IMR-90 (cell line): ENCODE measurements at regions of chr11 and their contacts with region 1.

Region 1: GRCh38 chr11:95512682-95513081 is 276.9 kb downstream of the FAM76B start:
- DNase-seq: peak; percentile 88
- ATAC-seq: peak; percentile 83
- H3K4me3 ChIP-seq: no peak overlapping the region
- H3K27ac ChIP-seq: no peak overlapping the region
- H3K4me1 ChIP-seq: peaks cover 5% of the 10 kb centered on the region
- H3K27me3 ChIP-seq: peaks cover 2% of the 10 kb centered on the region; the same call in 1 of the 2 replicates
- CTCF ChIP-seq: no peak
- POLR2A ChIP-seq: no peak
- RAD21 ChIP-seq: no peak

Region 2: GRCh38 chr11:95231127-95231880 is 281.4 kb before region 1 on chr11 and contains the start of gene SESN3:
- CTCF ChIA-PET with region 1: no interaction called
- POLR2A ChIA-PET with region 1: no interaction called
- dilution Hi-C with region 1: no loop called
- in situ Hi-C with region 1: no loop called
- intact Hi-C with region 1: loop called (anchors 1 kb)
- DNase-seq: peak; percentile 96
- ATAC-seq: peak; percentile 97
- H3K4me3 ChIP-seq: peak within 1 kb of the TSS; percentile 51
- H3K27ac ChIP-seq: peak within 1 kb of the TSS; percentile 81; the same call in 1 of the 2 replicates
- H3K4me1 ChIP-seq: no peaks in the 10 kb centered on the region
- H3K27me3 ChIP-seq: no peaks in the 10 kb centered on the region; the same call in 1 of the 2 replicates
- CTCF ChIP-seq: no peak
- POLR2A ChIP-seq: no peak
- RAD21 ChIP-seq: no peak
- total RNA-seq, gene SESN3: 7.7 and 10.0 TPM in 2 replicates